ENCODE measurements at regions of chr2 and their contacts with region 1.

Region 1: GRCh38 chr2:102826904-102827303 is 65.1 kb downstream of the TMEM182 start:
- DNase-seq: no peak
- H3K4me3 ChIP-seq: no peak overlapping the region
- H3K27ac ChIP-seq: no peak overlapping the region
- H3K4me1 ChIP-seq: no peaks in the 10 kb centered on the region
- H3K27me3 ChIP-seq: no peaks in the 10 kb centered on the region
- CTCF ChIP-seq: no peak
- POLR2A ChIP-seq: no peak

Region 2: GRCh38 chr2:102841107-102841840 is 14.4 kb after region 1 on chr2:
- CTCF ChIA-PET with region 1: interaction called, 14 read pairs
- POLR2A ChIA-PET with region 1: no interaction called
- dilution Hi-C with region 1: no loop called
- intact Hi-C with region 1: no loop called
- DNase-seq: peak; percentile 39
- H3K4me3 ChIP-seq: no peak overlapping the region
- H3K27ac ChIP-seq: no peak overlapping the region
- H3K4me1 ChIP-seq: no peaks in the 10 kb centered on the region
- H3K27me3 ChIP-seq: no peaks in the 10 kb centered on the region
- CTCF ChIP-seq: peak; percentile 48 to 70
- POLR2A ChIP-seq: no peak